ENCODE measurements at regions of chr16 and their contacts with region 1.

Region 1: GRCh38 chr16:981695-982144 is at the start of gene SOX8:
- DNase-seq: no peak
- H3K4me3 ChIP-seq: no peak within 1 kb of the TSS
- H3K27ac ChIP-seq: no peak within 1 kb of the TSS
- H3K4me1 ChIP-seq: no peaks in the 10 kb centered on the region
- H3K27me3 ChIP-seq: peaks cover 63% of the 10 kb centered on the region
- CTCF ChIP-seq: no peak
- total RNA-seq, gene SOX8: not detected in 2 replicates

Region 2: GRCh38 chr16:728131-728889 is 253.4 kb before region 1 on chr16:
- CTCF ChIA-PET with region 1: interaction called, 10 read pairs
- POLR2A ChIA-PET with region 1: no interaction called
- intact Hi-C with region 1: no loop called
- DNase-seq: peak; percentile 70 to 87
- H3K4me3 ChIP-seq: peak overlapping the region; percentile 93; the same call in 1 of the 2 replicates
- H3K27ac ChIP-seq: no peak overlapping the region
- H3K4me1 ChIP-seq: no peaks in the 10 kb centered on the region
- H3K27me3 ChIP-seq: no peaks in the 10 kb centered on the region
- CTCF ChIP-seq: no peak